Activated T-helper 2 cell treated with anti-CD3 and anti-CD28 coated beads, Interferon-gamma antibody, Interleukin-2, Interleukin-4, amounts not matched to agents 10 μg/mL and 5 μg/mL and 100 μg/mL, durations not matched to agents 14 hours and 24 hours and 36 hours (primary cell): ENCODE measurements at regions of chrX and their contacts with region 1.

Region 1: GRCh38 chrX:1657367-1658070 is 42.7 kb downstream of the ASMT start:
- DNase-seq: peak; percentile 51
- H3K4me3 Mint-ChIP-seq: peak overlapping the region; percentile 89
- H3K27ac Mint-ChIP-seq: peak overlapping the region; percentile 98
- H3K4me1 Mint-ChIP-seq: peaks cover 27% of the 10 kb centered on the region
- H3K27me3 Mint-ChIP-seq: no peaks in the 10 kb centered on the region

Region 2: GRCh38 chrX:714131-714530 is 943.4 kb before region 1 on chrX:
- intact Hi-C with region 1: no loop called
- DNase-seq: no peak
- H3K4me3 Mint-ChIP-seq: no peak overlapping the region
- H3K27ac Mint-ChIP-seq: no peak overlapping the region
- H3K4me1 Mint-ChIP-seq: no peaks in the 10 kb centered on the region
- H3K27me3 Mint-ChIP-seq: no peaks in the 10 kb centered on the region

Region 3: DNA sequence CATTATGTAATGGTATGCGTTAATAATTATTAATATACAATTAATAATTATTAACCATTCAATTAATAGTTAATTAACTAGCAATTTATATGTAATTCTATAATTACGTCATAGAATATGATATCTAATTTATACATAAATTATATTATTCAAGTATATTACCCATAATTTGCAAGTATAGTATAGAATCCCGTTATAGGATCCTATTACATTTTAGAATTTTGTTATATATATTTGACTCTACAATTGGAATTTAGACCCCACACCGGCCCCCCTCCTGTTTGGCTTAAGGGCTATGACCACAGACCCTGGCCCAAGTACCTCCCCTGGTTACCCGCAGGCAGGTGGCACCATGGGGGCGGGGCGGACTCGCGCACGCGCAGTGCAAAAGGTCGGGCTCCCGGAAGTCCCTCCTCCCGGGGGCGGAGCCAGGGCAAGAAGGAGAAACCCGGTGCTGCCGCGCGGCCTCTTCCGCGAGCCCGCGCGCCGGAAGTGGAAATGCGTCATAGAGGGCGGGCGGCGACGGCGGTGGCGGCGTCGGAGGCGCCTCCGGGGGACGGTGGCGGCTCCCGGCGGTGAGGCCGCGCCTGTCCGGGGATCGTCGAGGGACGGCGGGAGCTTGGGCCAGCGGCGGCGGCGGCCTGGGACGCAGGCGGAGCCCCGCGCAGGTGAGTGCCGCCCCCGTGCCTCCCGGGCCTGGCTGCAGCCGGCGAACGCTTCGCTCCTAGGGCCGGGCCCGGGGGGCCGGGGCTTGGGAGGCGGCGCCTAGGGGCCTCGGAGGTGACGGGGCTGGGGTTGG is 66.2 kb before region 1 on chrX and contains the start of gene AKAP17A:
- intact Hi-C with region 1: loop called (anchors 2 kb)
- DNase-seq: peak; percentile 98
- H3K4me3 Mint-ChIP-seq: peak within 1 kb of the TSS; percentile 93
- H3K27ac Mint-ChIP-seq: peak within 1 kb of the TSS; percentile 92
- H3K4me1 Mint-ChIP-seq: peaks cover 24% of the 10 kb centered on the region
- H3K27me3 Mint-ChIP-seq: no peaks in the 10 kb centered on the region
- total RNA-seq, gene AKAP17A: 67.4 and 67.6 TPM in 2 replicates

Region 4: GRCh38 chrX:1679238-1679637 is 21.7 kb after region 1 on chrX:
- intact Hi-C with region 1: loop called (anchors 2 kb)
- DNase-seq: no peak
- H3K4me3 Mint-ChIP-seq: no peak overlapping the region
- H3K27ac Mint-ChIP-seq: peak overlapping the region; percentile 76
- H3K4me1 Mint-ChIP-seq: peaks cover 21% of the 10 kb centered on the region
- H3K27me3 Mint-ChIP-seq: no peaks in the 10 kb centered on the region

Region 5: GRCh38 chrX:2500267-2501075 is 843.0 kb after region 1 on chrX and contains the starts of genes DHRSX and ZBED1:
- intact Hi-C with region 1: loop called (anchors 10 kb)
- DNase-seq: peak; percentile 44
- H3K4me3 Mint-ChIP-seq: peak within 1 kb of the TSS; percentile 70
- H3K27ac Mint-ChIP-seq: peak within 1 kb of the TSS; percentile 80
- H3K4me1 Mint-ChIP-seq: peaks cover 24% of the 10 kb centered on the region
- H3K27me3 Mint-ChIP-seq: no peaks in the 10 kb centered on the region
- total RNA-seq, gene DHRSX: 26.1 and 26.4 TPM in 2 replicates
- total RNA-seq, gene ZBED1: 37.3 and 43.1 TPM in 2 replicates

Region 6: GRCh38 chrX:2608638-2609430 is 951.3 kb after region 1 on chrX:
- intact Hi-C with region 1: loop called (anchors 2 kb)
- DNase-seq: peak; percentile 87
- H3K4me3 Mint-ChIP-seq: peak overlapping the region; percentile 95
- H3K27ac Mint-ChIP-seq: peak overlapping the region; percentile 89
- H3K4me1 Mint-ChIP-seq: peaks cover 37% of the 10 kb centered on the region
- H3K27me3 Mint-ChIP-seq: no peaks in the 10 kb centered on the region

Region 7: GRCh38 chrX:2690856-2691542 is 1033.5 kb after region 1 on chrX and contains the start of gene CD99:
- intact Hi-C with region 1: loop called (anchors 10 kb)
- DNase-seq: peak; percentile 89
- H3K4me3 Mint-ChIP-seq: peak within 1 kb of the TSS; percentile 95
- H3K27ac Mint-ChIP-seq: peak within 1 kb of the TSS; percentile 95
- H3K4me1 Mint-ChIP-seq: peaks cover 25% of the 10 kb centered on the region
- H3K27me3 Mint-ChIP-seq: peaks cover 1% of the 10 kb centered on the region
- total RNA-seq, gene CD99: 280 and 290 TPM in 2 replicates